H1 (cell line): ENCODE measurements at regions of chr12 and their contacts with region 1.

Region 1: DNA sequence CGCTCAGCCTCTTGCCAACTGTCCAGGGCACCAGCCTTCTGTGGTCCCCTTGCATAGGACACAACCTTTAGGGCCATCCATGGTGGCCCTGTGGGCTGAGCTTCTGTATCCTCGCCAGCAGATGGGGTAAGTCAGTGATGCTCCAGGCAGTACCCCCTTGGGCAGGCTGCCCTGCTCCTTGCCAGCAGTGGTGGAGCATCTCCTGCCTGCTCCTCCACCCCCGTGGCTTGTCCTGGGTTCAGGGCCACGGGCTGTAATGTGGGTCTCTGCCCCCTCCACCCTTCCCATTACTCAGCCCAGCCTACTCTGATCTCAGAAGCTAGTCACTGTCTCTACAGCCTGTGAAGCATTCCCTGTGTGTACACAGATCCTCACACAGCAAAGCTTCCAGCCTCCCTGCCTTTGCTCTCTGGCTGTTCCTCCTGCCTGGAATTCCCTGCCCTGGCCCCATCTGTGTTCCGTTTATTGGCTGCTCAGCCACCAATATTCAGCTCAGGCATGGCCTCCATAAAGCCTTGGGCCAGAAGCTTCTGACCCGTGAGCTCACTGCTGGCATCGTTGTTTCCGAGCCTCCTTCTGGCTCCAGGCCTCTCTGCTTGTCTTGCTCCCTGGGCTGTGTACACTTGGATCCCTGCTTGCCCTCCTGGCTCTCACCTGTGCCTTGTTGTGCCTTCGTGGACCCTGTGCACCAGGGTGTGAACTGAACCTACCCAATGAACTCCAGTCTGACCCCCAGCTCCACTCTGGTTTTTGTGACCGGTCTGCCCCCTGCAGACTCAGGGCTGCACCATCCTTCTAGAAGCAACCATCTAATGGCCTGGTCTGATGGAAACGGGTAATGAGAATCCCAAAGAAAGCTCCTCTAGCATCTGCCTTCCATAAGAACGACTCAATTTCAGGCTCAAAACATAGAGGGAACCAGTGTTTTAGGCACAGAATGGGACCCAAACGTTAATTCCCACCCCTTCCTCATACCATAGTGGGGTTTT is 177.0 kb upstream of the PRMT8 start:
- DNase-seq: no peak
- H3K4me3 ChIP-seq: no peak overlapping the region
- H3K27ac ChIP-seq: no peak overlapping the region
- H3K4me1 ChIP-seq: peaks cover 0 to 3% (median 0%) of the 10 kb centered on the region in 4 experiments; a peak in 2 of 7 replicates
- H3K27me3 ChIP-seq: no peaks in the 10 kb centered on the region; a peak in 2 of 7 replicates
- CTCF ChIP-seq: peak in 2 of 3 experiments; percentile 84 to 86; a peak in 3 of 4 replicates
- EP300 ChIP-seq: no peak
- POLR2A ChIP-seq: no peak
- RAD21 ChIP-seq: peak; percentile 76 to 82

Region 2: GRCh38 chr12:3129301-3130056 is 184.5 kb before region 1 on chr12:
- CTCF ChIA-PET with region 1: no interaction called
- POLR2A ChIA-PET with region 1: no interaction called
- DNase-seq: no peak
- H3K4me3 ChIP-seq: no peak overlapping the region
- H3K27ac ChIP-seq: no peak overlapping the region
- H3K4me1 ChIP-seq: peaks cover 0 to 5% (median 2%) of the 10 kb centered on the region in 4 experiments; a peak in 2 of 7 replicates
- H3K27me3 ChIP-seq: no peaks in the 10 kb centered on the region
- CTCF ChIP-seq: no peak
- EP300 ChIP-seq: no peak
- POLR2A ChIP-seq: no peak
- RAD21 ChIP-seq: no peak

Region 3: GRCh38 chr12:3242199-3242863 is 71.6 kb before region 1 on chr12:
- CTCF ChIA-PET with region 1: no interaction called
- POLR2A ChIA-PET with region 1: no interaction called
- DNase-seq: no peak
- H3K4me3 ChIP-seq: no peak overlapping the region
- H3K27ac ChIP-seq: no peak overlapping the region
- H3K4me1 ChIP-seq: peaks cover 0 to under 1% (median 0%) of the 10 kb centered on the region in 4 experiments; a peak in 4 of 7 replicates
- H3K27me3 ChIP-seq: no peaks in the 10 kb centered on the region
- CTCF ChIP-seq: peak in 1 of 3 experiments; percentile 9; a peak in 1 of 4 replicates
- EP300 ChIP-seq: no peak
- POLR2A ChIP-seq: no peak
- RAD21 ChIP-seq: no peak; a peak in 1 of 4 replicates

Region 4: DNA sequence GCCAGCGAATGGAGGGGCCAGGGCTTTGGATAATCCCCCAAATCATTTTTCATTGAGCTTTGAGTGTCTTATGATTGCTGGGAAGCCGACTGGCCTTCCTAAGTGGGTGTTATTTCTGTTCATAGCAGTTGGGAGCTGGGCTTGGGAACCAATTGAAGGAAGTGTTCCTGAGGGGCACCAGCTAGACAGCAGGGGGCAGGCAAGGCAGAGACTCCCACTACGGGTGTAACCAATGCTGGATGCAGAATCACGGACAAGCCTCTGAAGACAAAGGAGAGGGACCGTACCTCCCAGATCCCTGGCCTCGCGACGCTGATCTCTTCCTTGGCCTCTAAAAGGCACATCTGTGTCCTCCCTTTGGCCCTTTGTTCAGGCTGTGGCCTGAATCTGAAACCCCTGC is 28.1 kb after region 1 on chr12:
- CTCF ChIA-PET with region 1: interaction called, 20 read pairs
- POLR2A ChIA-PET with region 1: interaction called, 4 read pairs
- DNase-seq: peak in 1 of 2 experiments; percentile 21
- H3K4me3 ChIP-seq: no peak overlapping the region
- H3K27ac ChIP-seq: no peak overlapping the region
- H3K4me1 ChIP-seq: peaks cover 0 to 11% (median 3%) of the 10 kb centered on the region in 4 experiments; a peak in 4 of 7 replicates
- H3K27me3 ChIP-seq: peaks cover 0 to 3% (median 0%) of the 10 kb centered on the region in 4 experiments; a peak in 1 of 7 replicates
- CTCF ChIP-seq: peak; percentile 28 to 49 (median 49); a peak in 3 of 4 replicates
- EP300 ChIP-seq: no peak
- POLR2A ChIP-seq: no peak
- RAD21 ChIP-seq: peak; percentile 49 to 65

Region 5: GRCh38 chr12:3432176-3432742 is 118.3 kb after region 1 on chr12:
- CTCF ChIA-PET with region 1: interaction called, 12 read pairs
- POLR2A ChIA-PET with region 1: no interaction called
- DNase-seq: no peak
- H3K4me3 ChIP-seq: no peak overlapping the region
- H3K27ac ChIP-seq: no peak overlapping the region
- H3K4me1 ChIP-seq: peaks cover 2 to 13% (median 8%) of the 10 kb centered on the region in 4 experiments
- H3K27me3 ChIP-seq: no peaks in the 10 kb centered on the region
- CTCF ChIP-seq: no peak
- EP300 ChIP-seq: no peak
- POLR2A ChIP-seq: no peak
- RAD21 ChIP-seq: no peak

Region 6: GRCh38 chr12:3453990-3454675 is 140.2 kb after region 1 on chr12:
- CTCF ChIA-PET with region 1: interaction called, 109 read pairs
- POLR2A ChIA-PET with region 1: no interaction called
- DNase-seq: no peak
- H3K4me3 ChIP-seq: no peak overlapping the region
- H3K27ac ChIP-seq: no peak overlapping the region
- H3K4me1 ChIP-seq: peaks cover 0 to 11% (median 4%) of the 10 kb centered on the region in 4 experiments; a peak in 3 of 7 replicates
- H3K27me3 ChIP-seq: peaks cover 0 to 6% (median 4%) of the 10 kb centered on the region in 4 experiments; a peak in 4 of 7 replicates
- CTCF ChIP-seq: no peak
- EP300 ChIP-seq: no peak
- POLR2A ChIP-seq: no peak
- RAD21 ChIP-seq: no peak

Region 7: DNA sequence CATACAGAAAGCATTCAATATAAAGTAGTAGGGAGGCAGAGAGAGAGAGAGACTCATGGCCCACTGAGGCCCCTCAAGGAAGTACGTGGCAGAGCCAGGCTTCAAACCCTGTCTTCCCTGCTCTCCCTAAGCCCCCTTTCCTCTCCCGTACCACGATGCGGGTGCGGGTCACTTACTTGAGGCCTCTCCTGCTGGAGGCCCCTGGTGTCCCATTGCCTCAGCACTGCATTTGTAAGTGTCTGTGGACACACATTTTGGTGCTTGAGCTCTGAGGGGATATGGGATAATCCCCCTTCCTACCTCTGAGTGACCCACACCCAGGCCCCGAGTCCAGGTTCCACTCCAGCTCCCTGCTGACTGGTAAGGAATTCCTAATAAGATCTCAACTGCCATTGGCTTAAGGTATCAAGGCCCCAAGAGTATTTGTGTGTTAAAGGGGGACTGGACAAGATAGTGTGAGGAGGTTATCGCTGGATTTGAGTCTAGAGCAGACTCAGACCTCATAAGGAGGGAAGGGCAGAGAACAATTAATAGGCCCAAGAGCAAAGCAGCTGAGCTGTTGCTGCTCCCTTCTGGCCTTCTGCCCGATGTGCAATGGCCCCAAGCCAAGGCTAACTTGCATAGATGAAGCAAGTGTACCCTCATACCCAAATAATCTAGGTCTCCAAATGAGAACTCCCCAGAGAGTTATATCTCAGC is 367.1 kb after region 1 on chr12:
- CTCF ChIA-PET with region 1: interaction called, 18 read pairs
- POLR2A ChIA-PET with region 1: no interaction called
- DNase-seq: peak in 1 of 2 experiments; percentile 41
- H3K4me3 ChIP-seq: no peak overlapping the region
- H3K27ac ChIP-seq: no peak overlapping the region
- H3K4me1 ChIP-seq: no peaks in the 10 kb centered on the region
- H3K27me3 ChIP-seq: no peaks in the 10 kb centered on the region
- CTCF ChIP-seq: peak; percentile 34 to 52 (median 44); a peak in 3 of 4 replicates
- EP300 ChIP-seq: no peak
- POLR2A ChIP-seq: no peak
- RAD21 ChIP-seq: peak; percentile 63 to 72